Mammary epithelial cell (primary cell): ENCODE measurements at regions of chr16 and their contacts with region 1.

Region 1: GRCh38 chr16:25014500-25015147 is 545 bp downstream of the ARHGAP17 start:
- DNase-seq: peak; percentile 52
- H3K4me3 ChIP-seq: peak overlapping the region; percentile 93 to 99 (median 96)
- H3K27ac ChIP-seq: peak overlapping the region; percentile 69
- H3K4me1 ChIP-seq: peaks cover 26% of the 10 kb centered on the region
- H3K27me3 ChIP-seq: no peaks in the 10 kb centered on the region
- CTCF ChIP-seq: peak in 1 of 2 donors; percentile 2

Region 2: GRCh38 chr16:24729362-24729984 is 285.2 kb before region 1 on chr16 and contains the start of gene TNRC6A:
- CTCF ChIA-PET with region 1: no interaction called
- dilution Hi-C with region 1: no loop called
- in situ Hi-C with region 1: no loop called
- intact Hi-C with region 1: no loop called
- DNase-seq: peak; percentile 83
- H3K4me3 ChIP-seq: peak within 1 kb of the TSS; percentile 85 to 96 (median 89)
- H3K27ac ChIP-seq: peak within 1 kb of the TSS; percentile 81
- H3K4me1 ChIP-seq: peaks cover 17% of the 10 kb centered on the region
- H3K27me3 ChIP-seq: no peaks in the 10 kb centered on the region
- CTCF ChIP-seq: no peak
- total RNA-seq, gene TNRC6A: 21.3 to 36.9 TPM

Region 3: DNA sequence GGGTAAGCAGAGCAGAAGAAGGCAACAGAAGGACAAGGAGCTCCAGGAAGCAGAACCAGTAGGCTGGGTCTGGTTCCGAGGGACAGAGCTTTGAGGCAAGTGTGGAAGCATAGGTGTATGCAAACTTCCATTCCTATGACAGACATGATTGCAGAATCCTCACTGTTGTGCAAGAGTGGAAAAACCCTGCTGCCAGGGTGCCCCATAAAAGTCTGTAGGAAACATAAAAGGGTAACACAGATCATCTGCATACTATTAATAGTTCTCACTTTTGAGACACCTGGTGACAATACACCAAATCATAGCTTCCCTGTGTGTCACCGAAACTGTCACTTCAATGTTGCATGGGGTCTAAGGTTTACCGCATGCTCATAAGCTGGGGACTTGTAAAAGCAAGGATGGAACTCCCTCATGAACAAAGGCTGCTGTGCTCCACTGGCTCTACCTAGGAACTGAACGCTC is 39.2 kb before region 1 on chr16:
- CTCF ChIA-PET with region 1: no interaction called
- dilution Hi-C with region 1: no loop called
- in situ Hi-C with region 1: no loop called
- intact Hi-C with region 1: loop called (anchors 5 kb)
- DNase-seq: peak; percentile 70
- H3K4me3 ChIP-seq: no peak overlapping the region
- H3K27ac ChIP-seq: no peak overlapping the region
- H3K4me1 ChIP-seq: peaks cover 24% of the 10 kb centered on the region
- H3K27me3 ChIP-seq: no peaks in the 10 kb centered on the region
- CTCF ChIP-seq: no peak

Region 4: GRCh38 chr16:24993722-24994686 is 20.6 kb before region 1 on chr16:
- CTCF ChIA-PET with region 1: no interaction called
- dilution Hi-C with region 1: no loop called
- in situ Hi-C with region 1: no loop called
- intact Hi-C with region 1: loop called (anchors 1 kb)
- DNase-seq: peak; percentile 87
- H3K4me3 ChIP-seq: no peak overlapping the region
- H3K27ac ChIP-seq: peak overlapping the region; percentile 36
- H3K4me1 ChIP-seq: peaks cover 40% of the 10 kb centered on the region
- H3K27me3 ChIP-seq: no peaks in the 10 kb centered on the region
- CTCF ChIP-seq: no peak

Region 5: GRCh38 chr16:25051406-25052150 is 37.0 kb after region 1 on chr16:
- CTCF ChIA-PET with region 1: no interaction called
- dilution Hi-C with region 1: no loop called
- in situ Hi-C with region 1: no loop called
- intact Hi-C with region 1: no loop called
- DNase-seq: peak; percentile 68
- H3K4me3 ChIP-seq: no peak overlapping the region
- H3K27ac ChIP-seq: no peak overlapping the region
- H3K4me1 ChIP-seq: peaks cover 28% of the 10 kb centered on the region
- H3K27me3 ChIP-seq: no peaks in the 10 kb centered on the region
- CTCF ChIP-seq: no peak